Ovary (tissue), 10 donors: ENCODE measurements at regions of chr2 and their contacts with region 1.

Region 1: DNA sequence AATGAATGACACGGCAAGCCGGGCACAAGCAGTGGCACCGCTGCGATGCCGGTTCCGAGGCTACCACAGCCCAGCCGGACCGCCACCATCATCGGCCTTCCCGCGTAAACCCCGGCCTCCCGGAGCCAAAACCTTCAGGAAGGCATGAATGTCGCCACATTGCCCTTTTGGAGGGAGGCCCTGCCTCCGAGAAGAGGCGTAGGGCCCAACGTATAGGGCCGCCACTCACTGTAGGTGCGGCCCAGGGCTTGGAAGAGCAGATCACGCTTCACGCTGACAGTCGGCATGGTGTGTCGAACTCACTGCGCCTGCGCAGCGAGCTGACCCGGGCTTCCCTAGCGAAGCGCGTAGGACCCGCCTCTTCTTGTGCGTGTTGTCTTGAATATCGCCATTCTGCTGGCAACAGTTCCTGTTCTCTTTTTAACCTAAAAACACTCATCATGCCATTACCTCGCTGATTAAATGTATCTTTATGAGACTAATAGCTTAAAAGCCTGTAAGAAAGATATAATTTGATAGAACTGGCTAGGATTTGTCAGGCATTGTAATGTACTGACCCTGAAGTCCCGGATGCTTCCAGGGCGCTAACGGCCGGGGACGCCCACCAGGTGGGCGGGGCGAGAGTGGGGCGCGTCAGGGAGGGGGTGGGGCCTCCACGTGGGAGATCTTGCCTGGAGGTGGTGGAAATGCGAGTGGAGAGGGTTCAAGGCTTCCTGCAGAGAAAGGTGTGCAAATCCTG is at the start of gene FARSB:
- DNase-seq: peak; percentile 92 to 96 (median 94)
- H3K4me3 ChIP-seq: peak within 1 kb of the TSS; percentile 96
- H3K27ac ChIP-seq: peak within 1 kb of the TSS; percentile 76 to 96
- H3K4me1 ChIP-seq: peaks cover 6% of the 10 kb centered on the region
- H3K27me3 ChIP-seq: no peaks in the 10 kb centered on the region
- CTCF ChIP-seq: no peak
- EP300 ChIP-seq: no peak
- POLR2A ChIP-seq: peak; percentile 59
- total RNA-seq, gene FARSB: 10.3 to 32.0 (median 21.0) TPM

Region 2: DNA sequence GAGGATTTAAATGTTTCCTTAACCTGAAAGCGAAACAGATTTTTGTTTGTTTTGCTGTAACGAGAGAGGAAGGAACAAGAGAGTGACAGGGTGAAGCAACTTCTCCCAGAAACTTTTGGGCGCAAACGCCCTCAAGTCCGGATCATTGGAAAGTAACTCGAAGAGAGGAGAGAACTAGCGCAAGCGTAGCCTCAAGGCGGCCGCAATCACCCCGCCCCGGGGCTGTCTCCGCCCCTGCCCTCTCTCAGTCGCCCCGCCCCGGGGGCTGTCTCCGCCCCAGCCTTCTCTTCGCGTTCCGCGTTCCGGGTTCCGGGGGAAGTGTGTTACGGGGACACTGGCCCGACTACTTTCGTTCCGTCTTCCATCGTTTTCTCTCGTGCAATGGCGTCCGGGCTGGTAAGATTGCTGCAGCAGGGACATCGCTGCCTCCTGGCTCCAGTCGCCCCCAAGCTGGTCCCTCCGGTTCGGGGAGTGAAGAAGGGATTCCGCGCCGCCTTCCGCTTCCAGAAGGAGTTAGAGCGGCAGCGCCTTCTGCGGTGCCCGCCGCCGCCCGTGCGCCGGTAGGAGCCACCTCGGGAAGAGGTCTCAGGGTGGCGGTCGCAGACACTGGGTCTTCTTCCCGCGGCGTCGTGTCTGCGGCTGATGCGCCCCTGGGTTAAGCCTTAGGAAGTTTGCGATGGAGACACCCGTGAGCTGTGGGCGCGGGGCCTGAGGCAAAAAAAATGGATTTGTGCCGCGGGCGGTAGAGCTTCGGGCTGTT is 1301.3 kb after region 1 on chr2 and contains the start of gene MRPL44:
- intact Hi-C with region 1: loop called in 1 of 4 experiments (anchors 10 kb)
- DNase-seq: peak; percentile 95 to 99 (median 97)
- H3K4me3 ChIP-seq: peak within 1 kb of the TSS; percentile 67
- H3K27ac ChIP-seq: peak within 1 kb of the TSS; percentile 37 to 51
- H3K4me1 ChIP-seq: peaks cover 13% of the 10 kb centered on the region
- H3K27me3 ChIP-seq: no peaks in the 10 kb centered on the region
- CTCF ChIP-seq: peak in 1 of 3 donors; percentile 36
- EP300 ChIP-seq: no peak
- POLR2A ChIP-seq: peak; percentile 51
- total RNA-seq, gene MRPL44: 12.6 to 20.4 (median 15.9) TPM